H1 (cell line): ENCODE measurements at regions of chr10 and their contacts with region 1.

Region 1: GRCh38 chr10:100817268-100817839 is 72.0 kb downstream of the PAX2 start:
- DNase-seq: no peak
- H3K4me3 ChIP-seq: no peak overlapping the region
- H3K27ac ChIP-seq: no peak overlapping the region
- H3K4me1 ChIP-seq: peaks cover 0 to 5% (median 1%) of the 10 kb centered on the region in 4 experiments; a peak in 1 of 7 replicates
- H3K27me3 ChIP-seq: peaks cover 6 to 41% (median 18%) of the 10 kb centered on the region in 4 experiments
- CTCF ChIP-seq: peak; percentile 84 to 87 (median 86)
- EP300 ChIP-seq: no peak
- POLR2A ChIP-seq: no peak
- RAD21 ChIP-seq: peak; percentile 88 to 94

Region 2: GRCh38 chr10:100659361-100660098 is 157.8 kb before region 1 on chr10:
- CTCF ChIA-PET with region 1: no interaction called
- POLR2A ChIA-PET with region 1: no interaction called
- DNase-seq: no peak
- H3K4me3 ChIP-seq: peak overlapping the region in 2 of 4 experiments; percentile 5 to 41; a peak in 3 of 8 replicates
- H3K27ac ChIP-seq: no peak overlapping the region
- H3K4me1 ChIP-seq: peaks cover 0 to 14% (median 8%) of the 10 kb centered on the region in 4 experiments; a peak in 6 of 7 replicates
- H3K27me3 ChIP-seq: peaks cover 49 to 70% (median 68%) of the 10 kb centered on the region in 4 experiments
- CTCF ChIP-seq: no peak
- EP300 ChIP-seq: no peak
- POLR2A ChIP-seq: no peak
- RAD21 ChIP-seq: peak in 1 of 2 experiments; percentile 12; a peak in 1 of 4 replicates

Region 3: GRCh38 chr10:100728928-100729861 is 88.2 kb before region 1 on chr10:
- CTCF ChIA-PET with region 1: interaction called, 12 read pairs
- POLR2A ChIA-PET with region 1: no interaction called
- DNase-seq: peak in 1 of 2 experiments; percentile 79
- H3K4me3 ChIP-seq: peak overlapping the region in 1 of 4 experiments; percentile 48; a peak in 2 of 8 replicates
- H3K27ac ChIP-seq: no peak overlapping the region
- H3K4me1 ChIP-seq: peaks cover 4 to 20% (median 11%) of the 10 kb centered on the region in 4 experiments
- H3K27me3 ChIP-seq: peaks cover 94 to 99% (median 97%) of the 10 kb centered on the region in 4 experiments
- CTCF ChIP-seq: peak; percentile 58 to 72 (median 69)
- EP300 ChIP-seq: no peak
- POLR2A ChIP-seq: no peak
- RAD21 ChIP-seq: peak; percentile 50 to 64

Region 4: GRCh38 chr10:100766693-100767421 is 50.5 kb before region 1 on chr10:
- CTCF ChIA-PET with region 1: interaction called, 11 read pairs
- POLR2A ChIA-PET with region 1: no interaction called
- DNase-seq: no peak
- H3K4me3 ChIP-seq: no peak overlapping the region
- H3K27ac ChIP-seq: no peak overlapping the region
- H3K4me1 ChIP-seq: no peaks in the 10 kb centered on the region
- H3K27me3 ChIP-seq: peaks cover 0 to 7% (median 4%) of the 10 kb centered on the region in 4 experiments; a peak in 4 of 7 replicates
- CTCF ChIP-seq: peak; percentile 29 to 68 (median 48); a peak in 2 of 4 replicates
- EP300 ChIP-seq: no peak
- POLR2A ChIP-seq: no peak
- RAD21 ChIP-seq: peak; percentile 35 to 44; a peak in 3 of 4 replicates

Region 5: GRCh38 chr10:100803492-100803891 is 13.9 kb before region 1 on chr10:
- CTCF ChIA-PET with region 1: interaction called, 98 read pairs
- POLR2A ChIA-PET with region 1: no interaction called
- DNase-seq: no peak
- H3K4me3 ChIP-seq: no peak overlapping the region
- H3K27ac ChIP-seq: no peak overlapping the region
- H3K4me1 ChIP-seq: peaks cover 3 to 13% (median 5%) of the 10 kb centered on the region in 4 experiments; a peak in 6 of 7 replicates
- H3K27me3 ChIP-seq: peaks cover 0 to 17% (median 6%) of the 10 kb centered on the region in 4 experiments; a peak in 5 of 7 replicates
- CTCF ChIP-seq: no peak
- EP300 ChIP-seq: no peak
- POLR2A ChIP-seq: no peak
- RAD21 ChIP-seq: 0 out of 4 replicates have a peak, but pooled peaks of 1 of the 2 experiments have one; percentile 0

Region 6: DNA sequence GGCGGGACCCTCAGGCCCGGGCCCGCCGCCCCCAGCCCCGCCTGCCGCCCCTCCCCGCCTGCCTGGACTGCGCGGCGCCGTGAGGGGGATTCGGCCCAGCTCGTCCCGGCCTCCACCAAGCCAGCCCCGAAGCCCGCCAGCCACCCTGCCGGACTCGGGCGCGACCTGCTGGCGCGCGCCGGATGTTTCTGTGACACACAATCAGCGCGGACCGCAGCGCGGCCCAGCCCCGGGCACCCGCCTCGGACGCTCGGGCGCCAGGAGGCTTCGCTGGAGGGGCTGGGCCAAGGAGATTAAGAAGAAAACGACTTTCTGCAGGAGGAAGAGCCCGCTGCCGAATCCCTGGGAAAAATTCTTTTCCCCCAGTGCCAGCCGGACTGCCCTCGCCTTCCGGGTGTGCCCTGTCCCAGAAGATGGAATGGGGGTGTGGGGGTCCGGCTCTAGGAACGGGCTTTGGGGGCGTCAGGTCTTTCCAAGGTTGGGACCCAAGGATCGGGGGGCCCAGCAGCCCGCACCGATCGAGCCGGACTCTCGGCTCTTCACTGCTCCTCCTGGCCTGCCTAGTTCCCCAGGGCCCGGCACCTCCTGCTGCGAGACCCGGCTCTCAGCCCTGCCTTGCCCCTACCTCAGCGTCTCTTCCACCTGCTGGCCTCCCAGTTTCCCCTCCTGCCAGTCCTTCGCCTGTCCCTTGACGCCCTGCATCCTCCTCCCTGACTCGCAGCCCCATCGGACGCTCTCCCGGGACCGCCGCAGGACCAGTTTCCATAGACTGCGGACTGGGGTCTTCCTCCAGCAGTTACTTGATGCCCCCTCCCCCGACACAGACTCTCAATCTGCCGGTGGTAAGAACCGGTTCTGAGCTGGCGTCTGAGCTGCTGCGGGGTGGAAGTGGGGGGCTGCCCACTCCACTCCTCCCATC is 10.7 kb after region 1 on chr10:
- CTCF ChIA-PET with region 1: interaction called, 28 read pairs
- POLR2A ChIA-PET with region 1: interaction called, 3 read pairs
- DNase-seq: peak in 1 of 2 experiments; percentile 74
- H3K4me3 ChIP-seq: peak overlapping the region in 3 of 4 experiments; percentile 26 to 53 (median 28); a peak in 5 of 8 replicates
- H3K27ac ChIP-seq: no peak overlapping the region
- H3K4me1 ChIP-seq: peaks cover 4 to 26% (median 20%) of the 10 kb centered on the region in 4 experiments
- H3K27me3 ChIP-seq: peaks cover 96 to 100% (median 100%) of the 10 kb centered on the region in 4 experiments
- CTCF ChIP-seq: peak in 1 of 3 experiments; percentile 42; a peak in 2 of 4 replicates
- EP300 ChIP-seq: no peak
- POLR2A ChIP-seq: no peak
- RAD21 ChIP-seq: peak; percentile 12 to 52; a peak in 3 of 4 replicates

Region 7: DNA sequence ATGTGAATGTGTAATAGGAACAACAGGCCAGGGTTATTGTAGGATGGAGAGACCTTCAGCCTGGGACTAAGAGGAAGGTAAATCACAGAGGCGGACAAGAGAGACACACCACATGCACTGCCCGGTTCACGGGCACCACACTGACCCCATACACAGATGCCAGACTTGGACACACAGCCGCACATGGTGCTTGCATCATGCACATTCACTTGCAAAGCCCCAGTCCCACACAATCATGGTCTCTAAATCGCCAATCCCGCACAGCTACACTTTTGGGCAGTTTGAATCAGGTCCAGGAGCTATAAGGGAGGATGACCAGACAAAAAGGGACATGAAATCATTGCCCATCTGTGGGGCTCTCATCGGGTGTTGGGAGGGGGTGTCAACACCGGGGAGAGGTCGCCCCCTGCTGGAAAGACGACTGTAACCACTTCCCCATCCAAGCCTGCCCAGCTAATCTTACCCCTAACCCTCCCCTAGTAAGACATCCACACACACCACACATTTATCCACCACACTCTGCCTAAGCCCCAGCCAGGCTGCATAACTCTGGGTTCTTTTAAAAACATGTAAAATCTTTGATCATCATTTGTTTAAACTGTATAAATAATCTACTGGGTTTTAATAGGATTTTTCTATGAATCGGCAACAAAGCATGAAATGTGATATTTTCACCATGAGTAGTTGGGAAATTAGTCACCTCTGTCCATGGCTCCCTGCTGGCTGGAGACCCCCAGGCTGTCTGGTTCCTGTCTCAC is 54.9 kb after region 1 on chr10:
- CTCF ChIA-PET with region 1: interaction called, 11 read pairs
- POLR2A ChIA-PET with region 1: no interaction called
- DNase-seq: peak; percentile 27 to 92
- H3K4me3 ChIP-seq: no peak overlapping the region
- H3K27ac ChIP-seq: no peak overlapping the region
- H3K4me1 ChIP-seq: peaks cover 0 to 12% (median 7%) of the 10 kb centered on the region in 4 experiments; a peak in 5 of 7 replicates
- H3K27me3 ChIP-seq: peaks cover 0 to 29% (median 17%) of the 10 kb centered on the region in 4 experiments; a peak in 6 of 7 replicates
- CTCF ChIP-seq: peak; percentile 69 to 86 (median 84)
- EP300 ChIP-seq: no peak
- POLR2A ChIP-seq: no peak
- RAD21 ChIP-seq: peak; percentile 84 to 85

Region 8: GRCh38 chr10:100890673-100891317 is 73.4 kb after region 1 on chr10:
- CTCF ChIA-PET with region 1: interaction called, 12 read pairs
- POLR2A ChIA-PET with region 1: no interaction called
- DNase-seq: peak in 1 of 2 experiments; percentile 33
- H3K4me3 ChIP-seq: no peak overlapping the region
- H3K27ac ChIP-seq: no peak overlapping the region
- H3K4me1 ChIP-seq: peaks cover 0 to 8% (median 3%) of the 10 kb centered on the region in 4 experiments; a peak in 3 of 7 replicates
- H3K27me3 ChIP-seq: no peaks in the 10 kb centered on the region
- CTCF ChIP-seq: no peak
- EP300 ChIP-seq: no peak
- POLR2A ChIP-seq: no peak
- RAD21 ChIP-seq: no peak